Calu3 (cell line): ENCODE measurements at regions of chr13 and their contacts with region 1.

Region 1: DNA sequence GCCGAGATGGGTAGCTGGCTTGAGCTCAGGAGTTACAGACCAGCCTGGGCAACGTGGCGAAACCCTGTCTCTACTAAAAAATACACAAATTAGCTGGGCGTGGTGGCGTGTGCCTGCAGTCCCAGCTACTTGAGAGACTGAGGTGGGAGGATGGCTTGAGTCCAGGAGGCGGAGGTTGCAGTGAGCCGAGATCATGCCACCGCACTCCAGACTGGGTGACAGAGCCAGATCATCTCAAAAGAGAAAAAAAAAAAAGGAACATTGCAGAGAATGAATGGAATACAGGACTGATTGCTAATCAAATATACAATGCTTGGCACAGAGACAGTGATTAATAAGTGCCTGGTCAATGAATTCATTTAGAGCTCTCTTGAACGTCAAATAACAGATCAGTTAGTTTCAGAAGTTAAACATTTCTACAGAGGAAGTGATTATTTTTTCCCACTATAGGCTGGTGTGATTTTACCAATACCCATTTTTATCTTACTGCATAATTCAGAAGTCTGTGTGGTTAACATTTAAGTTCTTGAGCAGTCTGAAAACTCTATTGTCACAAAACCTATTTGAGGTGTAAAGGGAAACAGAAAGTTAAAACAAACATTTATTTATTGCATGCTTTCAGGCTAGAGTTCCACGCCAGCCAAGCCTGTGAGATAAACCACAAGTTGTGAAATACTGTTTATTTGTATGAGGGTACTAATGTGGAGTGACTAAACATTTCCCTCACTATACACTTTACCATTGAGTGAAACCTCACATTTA is 7.7 kb upstream of the TBC1D4 start:
- DNase-seq: peak; percentile 14
- H3K4me3 Mint-ChIP-seq: peak overlapping the region; percentile 55
- H3K27ac Mint-ChIP-seq: no peak overlapping the region
- H3K4me1 Mint-ChIP-seq: peaks cover 14% of the 10 kb centered on the region
- H3K27me3 Mint-ChIP-seq: no peaks in the 10 kb centered on the region
- CTCF ChIP-seq: no peak

Region 2: GRCh38 chr13:74398599-74398998 is 1091.1 kb before region 1 on chr13:
- CTCF ChIA-PET with region 1: no interaction called
- intact Hi-C with region 1: loop called (anchors 10 kb)
- DNase-seq: no peak
- H3K4me3 Mint-ChIP-seq: no peak overlapping the region
- H3K27ac Mint-ChIP-seq: no peak overlapping the region
- H3K4me1 Mint-ChIP-seq: no peaks in the 10 kb centered on the region
- H3K27me3 Mint-ChIP-seq: no peaks in the 10 kb centered on the region
- CTCF ChIP-seq: no peak